CD4-positive, alpha-beta T cell (primary cell): ENCODE measurements at regions of chr5 and their contacts with region 1.

Region 1: DNA sequence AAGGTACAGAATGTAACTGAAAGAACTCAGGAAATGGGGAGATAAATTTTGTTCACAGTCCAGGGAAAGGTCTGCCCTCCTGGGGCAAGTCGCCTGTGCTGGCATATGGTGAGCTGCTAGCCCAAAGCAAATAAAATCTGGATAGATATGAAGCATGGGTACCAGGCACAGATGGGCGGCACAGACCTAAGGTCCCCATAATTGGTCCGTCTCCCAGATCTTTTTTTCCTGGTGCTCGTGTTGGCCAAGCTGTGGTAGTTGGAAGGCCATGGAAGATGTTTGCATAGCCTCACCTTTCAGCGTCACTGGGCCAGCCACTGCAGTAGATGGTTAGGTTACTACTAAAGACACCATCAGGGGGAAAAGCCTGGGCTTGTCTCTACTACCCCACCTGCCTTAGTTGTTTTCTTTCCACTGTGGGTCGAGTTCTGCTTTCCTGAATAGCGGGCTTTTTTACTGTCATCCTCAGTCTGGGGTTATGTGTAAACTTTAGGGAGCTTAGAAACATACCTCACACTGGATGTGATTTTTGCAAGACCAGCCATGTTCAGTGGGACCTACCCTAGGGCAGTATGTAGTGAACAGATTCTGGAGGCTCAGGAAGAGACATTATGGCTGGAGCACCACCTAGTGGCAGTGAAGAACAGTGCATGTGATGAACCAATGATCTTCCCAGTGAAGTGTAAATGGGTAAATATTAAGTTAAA is 24.2 kb upstream of the GLRX start:
- DNase-seq: peak; percentile 54 to 87 (median 61)
- ATAC-seq: peak; percentile 82
- H3K4me3 ChIP-seq: no peak overlapping the region
- H3K4me3 Mint-ChIP-seq: no peak overlapping the region
- H3K27ac ChIP-seq: no peak overlapping the region
- H3K27ac Mint-ChIP-seq: no peak overlapping the region
- H3K4me1 ChIP-seq: peaks cover 20% of the 10 kb centered on the region
- H3K4me1 Mint-ChIP-seq: peaks cover 15% of the 10 kb centered on the region
- H3K27me3 ChIP-seq: peaks cover 0 to 3% of the 10 kb centered on the region in 2 experiments
- H3K27me3 Mint-ChIP-seq: no peaks in the 10 kb centered on the region
- CTCF ChIP-seq: peak; percentile 95

Region 2: GRCh38 chr5:94968507-94969095 is 878.1 kb before region 1 on chr5:
- CTCF ChIA-PET with region 1: no interaction called
- POLR2A ChIA-PET with region 1: no interaction called
- intact Hi-C with region 1: loop called in 1 of 2 experiments (anchors 5 kb)
- DNase-seq: peak in 3 of 14 experiments; percentile 43 to 55 (median 54)
- ATAC-seq: no peak
- H3K4me3 ChIP-seq: no peak overlapping the region
- H3K4me3 Mint-ChIP-seq: no peak overlapping the region
- H3K27ac ChIP-seq: no peak overlapping the region
- H3K27ac Mint-ChIP-seq: no peak overlapping the region
- H3K4me1 ChIP-seq: no peaks in the 10 kb centered on the region
- H3K4me1 Mint-ChIP-seq: no peaks in the 10 kb centered on the region
- H3K27me3 ChIP-seq: no peaks in the 10 kb centered on the region
- H3K27me3 Mint-ChIP-seq: no peaks in the 10 kb centered on the region
- CTCF ChIP-seq: peak; percentile 80

Region 3: GRCh38 chr5:95646554-95647431 is 199.9 kb before region 1 on chr5 and contains the start of gene RFESD:
- CTCF ChIA-PET with region 1: interaction called, 5 read pairs
- POLR2A ChIA-PET with region 1: interaction called, 4 read pairs
- intact Hi-C with region 1: loop called (anchors 1 to 2 kb)
- DNase-seq: peak; percentile 82 to 97 (median 90)
- ATAC-seq: peak; percentile 92
- H3K4me3 ChIP-seq: peak within 1 kb of the TSS; percentile 74
- H3K4me3 Mint-ChIP-seq: peak within 1 kb of the TSS; percentile 88
- H3K27ac ChIP-seq: peak within 1 kb of the TSS; percentile 71 to 74
- H3K27ac Mint-ChIP-seq: peak within 1 kb of the TSS; percentile 68
- H3K4me1 ChIP-seq: peaks cover 18% of the 10 kb centered on the region
- H3K4me1 Mint-ChIP-seq: peaks cover 51% of the 10 kb centered on the region
- H3K27me3 ChIP-seq: no peaks in the 10 kb centered on the region
- H3K27me3 Mint-ChIP-seq: no peaks in the 10 kb centered on the region
- CTCF ChIP-seq: no peak
- total RNA-seq, gene RFESD: 1.3 to 1.5 TPM

Region 4: DNA sequence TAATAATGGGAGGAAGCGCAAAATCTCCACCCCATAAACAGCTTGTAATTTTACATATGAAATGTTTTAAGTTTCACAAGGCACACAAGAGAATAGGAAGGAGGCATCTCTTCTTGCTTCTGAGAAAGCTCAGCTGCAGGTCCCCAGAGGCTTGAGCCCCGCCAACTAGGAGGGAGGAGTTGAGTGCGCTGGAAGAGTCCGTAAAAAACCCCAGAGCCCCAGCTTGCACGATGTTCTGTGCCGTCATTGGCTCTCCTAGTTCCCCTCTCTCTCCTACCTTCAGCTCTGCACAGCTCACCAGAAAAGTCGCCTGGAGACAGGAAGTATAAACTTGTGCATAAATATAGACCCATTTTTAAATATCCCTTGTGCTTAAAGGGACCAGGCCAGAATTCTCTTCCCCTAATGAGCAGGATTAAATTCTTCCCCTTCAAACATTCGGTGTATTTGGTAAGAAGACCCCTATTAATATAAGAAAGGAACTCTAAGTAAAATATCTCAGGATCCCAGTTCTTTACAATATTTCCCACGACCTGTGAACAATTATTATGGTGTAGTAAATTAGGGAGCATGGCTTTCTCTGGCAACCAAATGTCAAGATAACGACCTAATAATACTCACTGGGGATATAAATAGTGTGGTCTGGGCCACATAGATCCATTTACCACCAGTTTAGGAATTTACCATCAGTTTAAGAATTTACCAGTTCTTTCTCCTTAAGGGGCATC is 37.9 kb before region 1 on chr5:
- CTCF ChIA-PET with region 1: interaction called, 6 read pairs
- POLR2A ChIA-PET with region 1: interaction called, 9 read pairs
- intact Hi-C with region 1: loop called (anchors 5 kb)
- DNase-seq: peak; percentile 59 to 94 (median 76)
- ATAC-seq: peak; percentile 100
- H3K4me3 ChIP-seq: peak overlapping the region; percentile 9
- H3K4me3 Mint-ChIP-seq: peak overlapping the region; percentile 26
- H3K27ac ChIP-seq: peak overlapping the region; percentile 63 to 79
- H3K27ac Mint-ChIP-seq: peak overlapping the region; percentile 76
- H3K4me1 ChIP-seq: peaks cover 59% of the 10 kb centered on the region
- H3K4me1 Mint-ChIP-seq: peaks cover 65% of the 10 kb centered on the region
- H3K27me3 ChIP-seq: no peaks in the 10 kb centered on the region
- H3K27me3 Mint-ChIP-seq: no peaks in the 10 kb centered on the region
- CTCF ChIP-seq: no peak

Region 5: DNA sequence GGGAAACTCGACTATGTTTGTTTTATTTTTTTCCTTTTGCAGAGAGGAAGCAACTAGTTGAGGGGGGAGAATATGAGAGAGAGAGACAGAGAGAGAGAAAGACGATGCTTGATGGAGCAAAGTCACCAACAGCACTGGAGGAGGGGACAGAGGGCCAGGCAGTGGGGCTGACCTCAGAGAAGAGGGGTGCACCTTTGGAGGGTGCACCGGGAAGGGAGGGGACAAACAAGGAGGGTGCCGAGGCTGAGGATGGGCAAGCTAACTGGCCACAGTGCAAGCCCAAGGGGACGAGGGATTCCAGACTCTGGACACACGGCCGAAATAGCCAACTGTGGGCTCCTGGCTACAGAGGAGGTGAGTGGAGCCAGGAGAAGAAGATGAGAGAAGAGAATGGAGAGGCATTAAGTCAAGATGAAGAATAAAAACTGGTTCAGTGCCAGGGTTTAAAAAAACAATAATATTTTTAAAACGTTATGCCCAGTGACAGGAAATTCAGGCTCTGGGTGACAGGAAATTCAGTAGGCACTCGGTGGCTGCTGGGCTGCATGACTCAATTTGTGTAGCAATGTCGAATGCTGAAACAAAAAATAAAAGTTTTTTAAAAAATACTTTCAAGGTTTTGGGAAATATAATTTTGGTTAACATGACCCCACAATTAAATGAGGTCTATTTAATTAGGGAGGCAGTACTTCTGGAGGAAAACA is 10.9 kb before region 1 on chr5:
- CTCF ChIA-PET with region 1: interaction called, 16 read pairs
- POLR2A ChIA-PET with region 1: interaction called, 5 read pairs
- intact Hi-C with region 1: loop called in 1 of 2 experiments (anchors 1 kb)
- DNase-seq: peak in 10 of 14 experiments; percentile 38 to 70 (median 56)
- ATAC-seq: peak; percentile 37
- H3K4me3 ChIP-seq: peak overlapping the region; percentile 71
- H3K4me3 Mint-ChIP-seq: peak overlapping the region; percentile 83
- H3K27ac ChIP-seq: peak overlapping the region; percentile 66 to 79
- H3K27ac Mint-ChIP-seq: peak overlapping the region; percentile 79
- H3K4me1 ChIP-seq: peaks cover 32% of the 10 kb centered on the region
- H3K4me1 Mint-ChIP-seq: peaks cover 54% of the 10 kb centered on the region
- H3K27me3 ChIP-seq: no peaks in the 10 kb centered on the region
- H3K27me3 Mint-ChIP-seq: no peaks in the 10 kb centered on the region
- CTCF ChIP-seq: no peak

Region 6: GRCh38 chr5:96067894-96068614 is 221.3 kb after region 1 on chr5:
- CTCF ChIA-PET with region 1: no interaction called
- POLR2A ChIA-PET with region 1: no interaction called
- intact Hi-C with region 1: no loop called
- DNase-seq: no peak
- ATAC-seq: no peak
- H3K4me3 ChIP-seq: no peak overlapping the region
- H3K4me3 Mint-ChIP-seq: no peak overlapping the region
- H3K27ac ChIP-seq: no peak overlapping the region
- H3K27ac Mint-ChIP-seq: no peak overlapping the region
- H3K4me1 ChIP-seq: no peaks in the 10 kb centered on the region
- H3K4me1 Mint-ChIP-seq: no peaks in the 10 kb centered on the region
- H3K27me3 ChIP-seq: no peaks in the 10 kb centered on the region
- H3K27me3 Mint-ChIP-seq: no peaks in the 10 kb centered on the region
- CTCF ChIP-seq: no peak